K562 (cell line): ENCODE measurements at regions of chr22 and their contacts with region 1.

Region 1: DNA sequence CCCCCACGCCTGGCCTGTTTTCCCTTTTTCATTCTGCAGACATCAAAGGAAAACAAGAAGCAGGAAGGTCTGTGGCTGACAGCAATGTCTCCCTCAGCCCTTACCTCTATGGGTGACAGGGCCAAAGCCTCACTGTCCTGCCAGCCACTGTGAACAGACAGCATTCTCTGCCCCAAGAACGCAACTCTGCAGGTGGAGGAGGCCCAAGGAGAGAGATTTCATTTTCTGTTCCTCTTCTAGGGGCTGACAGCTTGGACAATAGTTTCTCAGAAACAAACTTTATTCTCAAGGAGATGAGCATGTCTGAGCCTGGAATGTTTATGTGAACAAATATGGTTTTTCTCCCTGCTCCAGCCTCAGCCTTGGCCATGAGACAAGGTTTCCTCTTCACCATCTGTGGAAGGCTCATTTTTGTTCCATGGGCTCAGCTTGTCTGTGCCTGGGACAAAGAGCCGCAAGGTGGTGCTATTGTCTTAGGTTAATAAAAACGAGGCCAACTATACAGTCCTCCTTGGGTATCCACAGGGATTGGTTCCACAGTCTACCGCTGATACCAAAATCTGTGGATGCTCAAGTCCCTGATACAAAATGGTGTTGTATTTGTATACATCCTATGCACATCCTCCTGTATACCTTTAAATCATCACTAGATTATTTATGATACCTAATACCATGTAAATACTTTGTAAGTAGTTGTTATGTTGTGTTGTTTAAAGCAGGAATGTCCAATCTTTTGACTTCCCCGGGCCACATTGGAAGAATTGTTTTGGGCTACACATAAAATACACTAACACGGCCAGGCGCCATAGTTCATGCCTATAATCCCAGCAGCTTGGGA is 5.8 kb downstream of the PIWIL3 start:
- DNase-seq: peak; percentile 38 to 67 (median 47)
- ATAC-seq: peak; percentile 96
- H3K4me3 ChIP-seq: no peak overlapping the region
- H3K27ac ChIP-seq: no peak overlapping the region
- H3K4me1 ChIP-seq: peaks cover 0 to 4% of the 10 kb centered on the region in 2 experiments; a peak in 2 of 5 replicates
- H3K27me3 ChIP-seq: peaks cover 0 to 7% of the 10 kb centered on the region in 2 experiments; a peak in 2 of 5 replicates
- CTCF ChIP-seq: peak; percentile 61 to 75 (median 68)
- EP300 ChIP-seq: no peak
- POLR2A ChIP-seq: no peak
- RAD21 ChIP-seq: peak; percentile 44 to 75

Region 2: GRCh38 chr22:24803011-24803542 is 34.3 kb after region 1 on chr22:
- CTCF ChIA-PET with region 1: no interaction called
- POLR2A ChIA-PET with region 1: no interaction called
- in situ Hi-C with region 1: no loop called
- intact Hi-C with region 1: loop called (anchors 5 kb)
- DNase-seq: peak; percentile 52 to 67 (median 60)
- ATAC-seq: peak; percentile 66
- H3K4me3 ChIP-seq: no peak overlapping the region
- H3K27ac ChIP-seq: no peak overlapping the region
- H3K4me1 ChIP-seq: peaks cover 0 to 10% of the 10 kb centered on the region in 2 experiments; a peak in 2 of 5 replicates
- H3K27me3 ChIP-seq: peaks cover 8 to 21% of the 10 kb centered on the region in 2 experiments; a peak in 3 of 5 replicates
- CTCF ChIP-seq: peak; percentile 75 to 90 (median 84)
- EP300 ChIP-seq: no peak
- POLR2A ChIP-seq: no peak
- RAD21 ChIP-seq: peak in 1 of 2 experiments; percentile 25; a peak in 1 of 4 replicates

Region 3: GRCh38 chr22:24845041-24845898 is 76.5 kb after region 1 on chr22:
- CTCF ChIA-PET with region 1: interaction called, 7 read pairs
- POLR2A ChIA-PET with region 1: no interaction called
- in situ Hi-C with region 1: no loop called
- intact Hi-C with region 1: loop called (anchors 2 kb)
- DNase-seq: no peak
- ATAC-seq: no peak; the same call in 2 of the 3 replicates
- H3K4me3 ChIP-seq: no peak overlapping the region
- H3K27ac ChIP-seq: no peak overlapping the region
- H3K4me1 ChIP-seq: no peaks in the 10 kb centered on the region
- H3K27me3 ChIP-seq: peaks cover 0 to 28% of the 10 kb centered on the region in 2 experiments; a peak in 2 of 5 replicates
- CTCF ChIP-seq: no peak
- EP300 ChIP-seq: no peak
- POLR2A ChIP-seq: no peak
- RAD21 ChIP-seq: no peak

Region 4: DNA sequence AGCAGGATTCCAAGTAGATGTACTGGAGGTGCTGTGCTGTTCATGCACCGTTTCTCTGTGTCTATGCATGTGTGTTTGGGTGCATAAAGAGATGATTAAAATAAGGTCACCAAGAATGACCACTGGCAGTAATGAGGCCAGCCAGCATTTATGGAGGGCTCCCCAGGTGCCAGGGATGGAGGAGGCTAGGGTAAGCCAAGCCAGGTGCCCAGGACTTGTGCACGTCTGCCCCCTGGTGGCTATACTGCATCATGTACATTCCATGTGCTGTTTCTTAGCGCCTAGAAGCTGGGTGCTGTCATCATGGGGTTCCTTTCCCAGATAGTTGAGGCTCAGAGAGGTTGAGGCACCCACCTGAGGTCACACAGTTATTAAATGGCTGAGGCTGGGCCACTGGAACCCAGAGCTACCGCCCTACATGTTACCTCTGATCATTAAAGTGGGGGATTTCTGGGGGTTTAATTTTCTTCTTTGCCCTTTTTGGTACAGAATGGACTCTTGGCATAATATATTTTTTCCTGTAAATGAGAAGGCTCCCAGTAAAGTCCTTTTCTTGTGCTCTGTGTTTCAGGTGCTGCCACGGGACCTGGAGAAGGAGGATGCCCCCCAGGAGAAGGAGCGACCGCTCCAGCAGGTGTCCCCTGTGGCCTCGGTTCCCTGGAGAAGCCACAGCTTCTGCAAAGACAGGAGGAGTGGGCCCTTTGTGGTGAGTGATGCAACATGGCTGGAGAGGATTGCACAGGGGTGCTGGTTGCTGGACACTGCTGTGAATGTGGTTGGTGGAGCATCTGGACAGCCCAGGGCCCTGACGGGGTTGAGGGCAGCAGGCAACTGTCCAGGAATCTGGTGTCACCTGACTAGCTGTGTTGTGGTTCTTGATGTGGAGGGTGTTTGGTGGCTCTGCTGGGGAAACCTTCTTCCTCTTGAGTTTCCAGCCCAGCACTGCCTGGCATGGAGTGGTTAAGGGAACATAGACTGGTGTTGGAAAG is 280.2 kb after region 1 on chr22:
- CTCF ChIA-PET with region 1: no interaction called
- POLR2A ChIA-PET with region 1: no interaction called
- in situ Hi-C with region 1: loop called (anchors 10 kb)
- intact Hi-C with region 1: loop called (anchors 2 kb)
- DNase-seq: peak; percentile 60 to 68 (median 64)
- ATAC-seq: peak; percentile 84
- H3K4me3 ChIP-seq: no peak overlapping the region
- H3K27ac ChIP-seq: no peak overlapping the region
- H3K4me1 ChIP-seq: no peaks in the 10 kb centered on the region
- H3K27me3 ChIP-seq: no peaks in the 10 kb centered on the region; a peak in 2 of 5 replicates
- CTCF ChIP-seq: peak; percentile 65 to 71 (median 70)
- EP300 ChIP-seq: no peak
- POLR2A ChIP-seq: no peak
- RAD21 ChIP-seq: peak; percentile 38 to 76